ENCODE measurements at regions of chr12 and their contacts with region 1.

Region 1: GRCh38 chr12:106223485-106224354 is 24.1 kb downstream of the CKAP4 start:
- DNase-seq: peak; percentile 63 to 83
- ATAC-seq: peak; percentile 86 to 91 (median 89)
- H3K4me3 ChIP-seq: no peak overlapping the region
- H3K4me3 Mint-ChIP-seq: no peak overlapping the region
- H3K27ac ChIP-seq: no peak overlapping the region
- H3K27ac Mint-ChIP-seq: no peak overlapping the region
- H3K4me1 ChIP-seq: peaks cover 6% of the 10 kb centered on the region
- H3K4me1 Mint-ChIP-seq: peaks cover 0 to 5% of the 10 kb centered on the region in 2 donors
- H3K27me3 ChIP-seq: no peaks in the 10 kb centered on the region
- H3K27me3 Mint-ChIP-seq: peaks cover 10 to 22% of the 10 kb centered on the region in 2 donors
- CTCF ChIP-seq: peak; percentile 95

Region 2: DNA sequence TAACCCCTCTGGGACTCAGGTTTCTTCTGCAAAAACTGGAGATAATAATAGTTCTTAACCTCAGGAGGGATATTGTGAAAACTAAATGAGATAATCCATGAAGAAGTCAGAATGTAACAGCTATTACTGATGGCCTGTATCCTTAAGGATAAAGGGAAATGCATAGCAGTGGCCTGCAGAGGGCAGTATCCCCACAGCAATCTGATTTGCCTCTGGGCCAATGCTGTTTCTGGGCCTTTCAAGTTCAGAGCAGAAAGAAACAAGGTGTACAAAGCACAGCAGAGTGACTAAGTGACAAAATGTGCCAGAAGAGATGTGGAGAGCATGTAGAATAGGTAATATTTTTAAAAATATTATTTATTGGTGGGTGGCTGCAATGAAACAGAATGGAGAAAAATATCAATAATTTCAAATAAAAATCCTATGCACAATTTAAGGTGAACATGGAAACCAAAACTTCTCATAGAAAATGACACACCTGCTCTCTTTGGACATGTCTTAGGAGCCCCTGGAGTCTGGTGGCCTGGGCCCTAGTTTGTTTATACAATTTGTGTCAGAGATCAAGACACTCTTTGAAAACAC is 803.0 kb before region 1 on chr12:
- intact Hi-C with region 1: loop called (anchors 1 kb)
- DNase-seq: peak; percentile 52 to 78
- ATAC-seq: peak; percentile 71 to 88 (median 78)
- H3K4me3 ChIP-seq: no peak overlapping the region
- H3K4me3 Mint-ChIP-seq: no peak overlapping the region
- H3K27ac ChIP-seq: no peak overlapping the region
- H3K27ac Mint-ChIP-seq: no peak overlapping the region
- H3K4me1 ChIP-seq: no peaks in the 10 kb centered on the region
- H3K4me1 Mint-ChIP-seq: no peaks in the 10 kb centered on the region
- H3K27me3 ChIP-seq: no peaks in the 10 kb centered on the region
- H3K27me3 Mint-ChIP-seq: peaks cover 0 to 3% of the 10 kb centered on the region in 2 donors
- CTCF ChIP-seq: peak; percentile 99

Region 3: DNA sequence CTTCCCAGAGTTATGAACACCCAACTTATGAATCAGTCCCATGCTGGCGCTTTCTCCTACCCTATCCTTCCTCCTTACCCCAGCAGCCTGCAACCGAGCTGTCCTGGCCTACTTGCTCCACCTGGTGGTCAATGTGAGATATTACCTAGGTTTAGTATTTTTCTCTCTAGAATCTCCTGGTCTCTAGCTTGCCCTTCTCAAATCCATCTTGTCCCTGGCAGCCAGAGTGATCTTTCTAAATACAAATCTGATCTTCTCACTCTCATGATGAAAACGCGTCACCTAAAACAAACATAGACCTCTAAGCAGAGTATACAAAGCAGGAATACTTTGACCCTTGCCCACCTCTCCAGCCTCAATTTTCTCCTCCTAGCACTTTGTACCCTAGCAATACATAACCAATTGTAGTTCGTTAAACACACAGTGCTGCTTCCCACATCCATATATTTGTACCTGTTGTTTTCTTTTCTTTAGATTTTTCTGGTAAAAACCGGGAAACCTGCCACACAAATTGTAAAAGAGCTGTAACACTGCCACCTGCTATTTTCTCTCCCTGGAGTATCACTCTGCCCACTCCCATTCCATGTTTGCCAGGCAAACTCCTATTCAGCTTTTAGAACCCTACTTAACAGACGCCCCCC is 58.9 kb after region 1 on chr12:
- intact Hi-C with region 1: loop called (anchors 1 kb)
- DNase-seq: peak in 1 of 2 donors; percentile 82
- ATAC-seq: peak; percentile 72 to 78 (median 77)
- H3K4me3 ChIP-seq: no peak overlapping the region
- H3K4me3 Mint-ChIP-seq: no peak overlapping the region
- H3K27ac ChIP-seq: no peak overlapping the region
- H3K27ac Mint-ChIP-seq: no peak overlapping the region
- H3K4me1 ChIP-seq: no peaks in the 10 kb centered on the region
- H3K4me1 Mint-ChIP-seq: no peaks in the 10 kb centered on the region
- H3K27me3 ChIP-seq: peaks cover 6% of the 10 kb centered on the region
- H3K27me3 Mint-ChIP-seq: peaks cover 31 to 33% of the 10 kb centered on the region in 2 donors
- CTCF ChIP-seq: peak; percentile 64

Region 4: GRCh38 chr12:106329231-106329982 is 105.7 kb after region 1 on chr12:
- intact Hi-C with region 1: no loop called
- DNase-seq: no peak
- ATAC-seq: no peak
- H3K4me3 ChIP-seq: no peak overlapping the region
- H3K4me3 Mint-ChIP-seq: no peak overlapping the region
- H3K27ac ChIP-seq: no peak overlapping the region
- H3K27ac Mint-ChIP-seq: no peak overlapping the region
- H3K4me1 ChIP-seq: no peaks in the 10 kb centered on the region
- H3K4me1 Mint-ChIP-seq: peaks cover 4 to 15% of the 10 kb centered on the region in 2 donors
- H3K27me3 ChIP-seq: no peaks in the 10 kb centered on the region
- H3K27me3 Mint-ChIP-seq: no peaks in the 10 kb centered on the region
- CTCF ChIP-seq: no peak

Measured in natural killer cell (primary cell).